ENCODE measurements at regions of chr2 and their contacts with region 1.

Region 1: GRCh38 chr2:99337113-99338028 is at the start of gene EIF5B:
- DNase-seq: peak; percentile 95
- ATAC-seq: peak; percentile 86
- H3K4me3 ChIP-seq: peak within 1 kb of the TSS; percentile 69
- H3K27ac ChIP-seq: peak within 1 kb of the TSS; percentile 75
- H3K4me1 ChIP-seq: no peaks in the 10 kb centered on the region
- H3K27me3 ChIP-seq: no peaks in the 10 kb centered on the region
- CTCF ChIP-seq: peak; percentile 73
- POLR2A ChIP-seq: peak; percentile 40; the same call in 1 of the 2 replicates
- RAD21 ChIP-seq: peak; percentile 37
- total RNA-seq, gene EIF5B: 19.7 and 26.9 TPM in 2 replicates

Region 2: GRCh38 chr2:98795891-98796676 is 541.3 kb before region 1 on chr2:
- CTCF ChIA-PET with region 1: no interaction called
- POLR2A ChIA-PET with region 1: no interaction called
- dilution Hi-C with region 1: no loop called
- in situ Hi-C with region 1: no loop called
- intact Hi-C with region 1: no loop called
- DNase-seq: no peak
- ATAC-seq: no peak
- H3K4me3 ChIP-seq: no peak overlapping the region
- H3K27ac ChIP-seq: no peak overlapping the region
- H3K4me1 ChIP-seq: no peaks in the 10 kb centered on the region
- H3K27me3 ChIP-seq: peaks cover 9% of the 10 kb centered on the region
- CTCF ChIP-seq: no peak
- POLR2A ChIP-seq: no peak
- RAD21 ChIP-seq: no peak

Region 3: DNA sequence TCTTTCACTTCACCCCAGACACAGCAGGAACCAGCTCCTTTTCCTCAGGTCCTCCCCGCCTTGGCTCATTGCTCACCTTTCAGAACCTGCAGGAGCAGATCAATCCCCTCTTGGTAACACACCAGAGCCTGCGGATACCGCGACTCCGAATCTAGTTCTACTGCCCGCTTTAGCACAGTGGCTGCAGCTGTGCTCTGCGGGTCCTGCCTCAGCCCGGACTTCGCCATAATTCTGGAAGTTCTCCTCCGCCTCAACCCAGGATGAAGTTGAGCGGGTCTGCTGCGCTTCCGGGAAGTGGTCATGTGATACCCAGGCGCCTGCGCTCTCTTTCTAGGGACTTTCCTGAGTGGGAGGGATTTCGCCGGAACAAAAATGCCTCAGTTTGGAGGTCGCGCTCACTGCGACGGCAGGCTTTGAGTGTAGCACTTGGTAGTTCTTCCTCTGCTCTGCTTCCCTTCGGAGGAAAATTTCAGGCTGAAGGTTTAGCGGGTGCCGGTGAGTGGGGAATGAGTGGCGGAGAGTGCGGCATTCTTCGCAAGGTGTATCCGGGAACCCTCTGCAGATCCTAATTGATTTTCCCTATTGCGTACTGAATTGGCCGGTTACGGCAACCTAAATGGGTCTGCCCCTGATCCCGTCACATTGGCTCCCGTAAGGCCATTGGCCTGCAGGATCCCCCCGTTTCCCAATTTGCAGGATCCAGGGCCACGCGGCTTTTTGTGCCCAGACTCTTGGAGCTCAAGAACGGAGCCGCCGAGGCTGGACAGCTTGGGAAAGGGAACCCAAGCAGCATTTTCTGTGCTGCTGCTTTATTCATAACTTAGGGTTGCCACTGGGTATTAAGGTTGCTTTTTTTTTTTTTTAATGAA is 156.4 kb before region 1 on chr2 and contains the starts of genes MITD1 and MRPL30:
- CTCF ChIA-PET with region 1: no interaction called
- POLR2A ChIA-PET with region 1: no interaction called
- dilution Hi-C with region 1: no loop called
- in situ Hi-C with region 1: loop called (anchors 10 kb)
- intact Hi-C with region 1: loop called (anchors 1 kb)
- DNase-seq: peak; percentile 96
- ATAC-seq: peak; percentile 97
- H3K4me3 ChIP-seq: peak within 1 kb of the TSS; percentile 75
- H3K27ac ChIP-seq: peak within 1 kb of the TSS; percentile 77
- H3K4me1 ChIP-seq: no peaks in the 10 kb centered on the region; the same call in 1 of the 2 replicates
- H3K27me3 ChIP-seq: no peaks in the 10 kb centered on the region
- CTCF ChIP-seq: no peak
- POLR2A ChIP-seq: peak; percentile 95
- RAD21 ChIP-seq: 0 out of 2 replicates have a peak, but pooled peaks have one; percentile 10
- total RNA-seq, gene MITD1: 4.3 and 19.4 TPM in 2 replicates
- total RNA-seq, gene MRPL30: 34.8 and 39.2 TPM in 2 replicates

Measured in IMR-90 (cell line).